Activated CD4-positive, alpha-beta memory T cell treated with anti-CD3 and anti-CD28 coated beads for 36 hours (primary cell): ENCODE measurements at regions of chr4 and their contacts with region 1.

Region 1: DNA sequence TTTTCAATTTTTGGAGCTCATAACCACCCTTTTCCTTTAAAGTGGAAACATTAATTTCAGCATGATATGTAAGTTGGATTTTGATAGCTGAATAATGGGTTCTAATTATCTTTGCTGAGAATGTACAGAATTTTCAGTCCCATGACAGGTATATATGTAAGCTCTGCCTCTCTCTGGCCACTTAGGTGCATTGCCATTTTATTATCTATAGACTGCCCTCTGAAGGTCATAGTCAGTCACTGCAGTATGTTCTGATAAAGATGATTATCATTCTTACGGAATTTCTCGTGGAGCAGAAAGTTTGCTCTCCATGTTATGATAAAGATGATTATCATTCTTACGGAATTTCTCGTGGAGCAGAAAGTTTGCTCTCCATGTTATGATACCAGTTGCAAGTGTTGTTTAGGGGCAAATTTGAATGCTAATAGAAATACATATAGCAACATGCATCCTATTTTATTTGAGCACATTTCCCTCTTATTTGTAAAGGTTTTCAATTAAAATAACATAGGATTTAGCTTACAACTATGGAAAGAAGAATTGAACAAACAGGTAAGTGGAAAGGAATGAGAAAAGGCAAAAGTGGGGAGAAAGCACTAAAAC is 10.4 kb downstream of the AFP start:
- DNase-seq: no peak
- H3K4me3 Mint-ChIP-seq: no peak overlapping the region
- H3K27ac Mint-ChIP-seq: no peak overlapping the region
- H3K4me1 Mint-ChIP-seq: no peaks in the 10 kb centered on the region
- H3K27me3 Mint-ChIP-seq: peaks cover 15% of the 10 kb centered on the region

Region 2: DNA sequence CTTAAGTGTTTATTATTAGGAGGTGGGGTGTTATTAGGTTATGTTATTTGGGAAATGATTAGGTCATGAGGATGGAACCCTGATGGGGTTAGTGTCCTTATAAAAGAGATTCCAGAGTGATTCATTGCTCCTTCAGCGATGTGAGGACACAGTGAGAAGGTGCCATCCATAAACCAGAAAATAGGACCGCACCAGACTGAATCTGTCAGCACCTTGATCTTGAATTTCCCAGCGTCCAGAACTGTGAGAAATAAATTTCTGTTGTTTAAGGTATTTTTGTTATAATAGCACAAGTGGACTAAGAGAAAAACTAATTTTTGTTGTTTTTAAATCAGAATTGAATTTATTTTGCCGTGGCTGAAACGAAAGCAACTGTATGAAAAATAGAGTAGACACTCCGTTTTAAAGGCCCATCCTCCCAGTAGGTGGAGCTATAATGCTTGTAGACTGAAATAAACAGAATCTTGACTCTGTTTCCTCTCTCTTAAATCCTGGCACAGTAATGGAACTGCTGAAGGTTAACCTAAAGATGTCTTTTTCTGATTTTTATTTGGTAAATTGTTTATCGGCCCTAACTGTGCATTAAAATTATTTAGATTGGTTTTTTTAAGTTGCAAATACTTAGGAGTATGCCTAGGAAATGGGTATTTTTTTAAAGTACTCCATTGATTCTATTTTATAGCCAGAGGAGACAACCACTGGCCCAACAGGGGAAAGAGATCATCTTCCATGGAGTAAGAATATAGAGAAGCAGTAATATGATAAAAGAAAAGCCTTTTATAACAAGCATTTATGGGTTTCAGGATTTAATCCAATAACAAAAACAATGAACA is 744.2 kb before region 1 on chr4:
- CTCF ChIA-PET with region 1: interaction called, 3 read pairs
- POLR2A ChIA-PET with region 1: no interaction called
- intact Hi-C with region 1: loop called (anchors 10 kb)
- DNase-seq: no peak
- H3K4me3 Mint-ChIP-seq: peak overlapping the region; percentile 69
- H3K27ac Mint-ChIP-seq: no peak overlapping the region
- H3K4me1 Mint-ChIP-seq: no peaks in the 10 kb centered on the region
- H3K27me3 Mint-ChIP-seq: no peaks in the 10 kb centered on the region

Region 3: DNA sequence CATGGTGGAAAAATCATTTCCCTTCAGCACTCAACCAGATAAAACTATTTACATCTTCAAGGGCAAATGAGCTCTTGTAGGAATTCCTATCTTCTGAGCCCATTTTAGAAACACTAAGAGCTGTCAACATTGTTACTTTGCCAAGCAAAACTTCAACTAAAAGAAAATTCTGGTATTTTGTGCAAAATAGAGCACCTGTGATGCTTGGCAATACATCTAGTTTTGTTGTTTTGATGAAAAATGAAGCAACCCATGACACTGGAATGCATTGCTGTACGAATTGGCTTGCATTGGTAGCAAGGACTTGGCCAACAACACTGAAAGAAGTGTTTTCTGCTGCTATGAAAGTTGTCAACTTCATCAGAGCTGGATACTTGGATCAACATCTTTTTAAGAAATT is 571.3 kb before region 1 on chr4:
- CTCF ChIA-PET with region 1: no interaction called
- POLR2A ChIA-PET with region 1: no interaction called
- intact Hi-C with region 1: no loop called
- DNase-seq: no peak
- H3K4me3 Mint-ChIP-seq: no peak overlapping the region
- H3K27ac Mint-ChIP-seq: no peak overlapping the region
- H3K4me1 Mint-ChIP-seq: no peaks in the 10 kb centered on the region
- H3K27me3 Mint-ChIP-seq: no peaks in the 10 kb centered on the region

Region 4: DNA sequence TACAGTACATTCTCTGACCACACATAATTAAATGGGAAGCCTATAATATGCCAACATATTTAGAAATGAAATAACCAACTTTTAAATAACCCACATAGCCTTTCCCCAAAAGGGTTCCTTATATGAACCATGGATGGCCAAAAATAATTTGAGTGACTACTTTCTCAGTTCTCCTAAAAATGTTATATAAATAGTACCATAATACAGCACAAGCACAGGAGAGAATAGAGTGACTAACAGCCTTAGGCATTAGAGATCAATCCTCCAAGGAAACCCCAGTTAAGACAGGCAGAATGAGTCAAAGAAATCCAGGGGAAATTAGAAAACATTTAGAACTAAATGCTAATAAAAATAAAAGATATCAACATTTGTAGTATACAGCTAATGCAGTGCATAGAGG is 238.1 kb before region 1 on chr4:
- CTCF ChIA-PET with region 1: no interaction called
- POLR2A ChIA-PET with region 1: no interaction called
- intact Hi-C with region 1: no loop called
- DNase-seq: no peak
- H3K4me3 Mint-ChIP-seq: no peak overlapping the region
- H3K27ac Mint-ChIP-seq: no peak overlapping the region
- H3K4me1 Mint-ChIP-seq: peaks cover 44% of the 10 kb centered on the region
- H3K27me3 Mint-ChIP-seq: no peaks in the 10 kb centered on the region

Region 5: GRCh38 chr4:73311428-73311827 is 135.0 kb before region 1 on chr4:
- CTCF ChIA-PET with region 1: interaction called, 19 read pairs
- POLR2A ChIA-PET with region 1: no interaction called
- intact Hi-C with region 1: loop called (anchors 1 kb)
- DNase-seq: no peak
- H3K4me3 Mint-ChIP-seq: no peak overlapping the region
- H3K27ac Mint-ChIP-seq: no peak overlapping the region
- H3K4me1 Mint-ChIP-seq: no peaks in the 10 kb centered on the region
- H3K27me3 Mint-ChIP-seq: peaks cover 2% of the 10 kb centered on the region

Region 6: GRCh38 chr4:73341454-73341853 is 105.0 kb before region 1 on chr4:
- CTCF ChIA-PET with region 1: interaction called, 18 read pairs
- POLR2A ChIA-PET with region 1: no interaction called
- intact Hi-C with region 1: loop called (anchors 10 kb)
- DNase-seq: peak; percentile 13
- H3K4me3 Mint-ChIP-seq: no peak overlapping the region
- H3K27ac Mint-ChIP-seq: no peak overlapping the region
- H3K4me1 Mint-ChIP-seq: no peaks in the 10 kb centered on the region
- H3K27me3 Mint-ChIP-seq: peaks cover 3% of the 10 kb centered on the region

Region 7: DNA sequence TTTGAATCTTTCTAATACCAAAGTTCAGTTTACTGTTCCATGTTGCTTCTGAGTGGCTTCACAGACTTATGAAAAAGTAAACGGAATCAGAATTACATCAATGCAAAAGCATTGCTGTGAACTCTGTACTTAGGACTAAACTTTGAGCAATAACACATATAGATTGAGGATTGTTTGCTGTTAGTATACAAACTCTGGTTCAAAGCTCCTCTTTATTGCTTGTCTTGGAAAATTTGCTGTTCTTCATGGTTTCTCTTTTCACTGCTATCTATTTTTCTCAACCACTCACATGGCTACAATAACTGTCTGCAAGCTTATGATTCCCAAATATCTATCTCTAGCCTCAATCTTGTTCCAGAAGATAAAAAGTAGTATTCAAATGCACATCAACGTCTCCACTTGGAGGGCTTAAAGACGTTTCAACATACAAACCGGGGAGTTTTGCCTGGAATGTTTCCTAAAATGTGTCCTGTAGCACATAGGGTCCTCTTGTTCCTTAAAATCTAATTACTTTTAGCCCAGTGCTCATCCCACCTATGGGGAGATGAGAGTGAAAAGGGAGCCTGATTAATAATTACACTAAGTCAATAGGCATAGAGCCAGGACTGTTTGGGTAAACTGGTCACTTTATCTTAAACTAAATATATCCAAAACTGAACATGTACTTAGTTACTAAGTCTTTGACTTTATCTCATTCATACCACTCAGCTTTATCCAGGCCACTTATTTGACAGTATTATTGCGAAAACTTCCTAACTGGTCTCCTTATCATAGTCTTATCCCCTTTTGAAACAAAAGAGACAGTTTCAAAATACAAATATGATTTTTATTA is 14.1 kb before region 1 on chr4:
- CTCF ChIA-PET with region 1: interaction called, 13 read pairs
- POLR2A ChIA-PET with region 1: no interaction called
- intact Hi-C with region 1: no loop called
- DNase-seq: no peak
- H3K4me3 Mint-ChIP-seq: no peak overlapping the region
- H3K27ac Mint-ChIP-seq: no peak overlapping the region
- H3K4me1 Mint-ChIP-seq: no peaks in the 10 kb centered on the region
- H3K27me3 Mint-ChIP-seq: peaks cover 6% of the 10 kb centered on the region

Region 8: GRCh38 chr4:73468170-73468569 is 21.7 kb after region 1 on chr4:
- CTCF ChIA-PET with region 1: interaction called, 10 read pairs
- POLR2A ChIA-PET with region 1: no interaction called
- intact Hi-C with region 1: no loop called
- DNase-seq: no peak
- H3K4me3 Mint-ChIP-seq: no peak overlapping the region
- H3K27ac Mint-ChIP-seq: no peak overlapping the region
- H3K4me1 Mint-ChIP-seq: no peaks in the 10 kb centered on the region
- H3K27me3 Mint-ChIP-seq: peaks cover 3% of the 10 kb centered on the region

Region 9: GRCh38 chr4:73589261-73589847 is 142.9 kb after region 1 on chr4:
- CTCF ChIA-PET with region 1: no interaction called
- POLR2A ChIA-PET with region 1: no interaction called
- intact Hi-C with region 1: no loop called
- DNase-seq: no peak
- H3K4me3 Mint-ChIP-seq: no peak overlapping the region
- H3K27ac Mint-ChIP-seq: no peak overlapping the region
- H3K4me1 Mint-ChIP-seq: no peaks in the 10 kb centered on the region
- H3K27me3 Mint-ChIP-seq: no peaks in the 10 kb centered on the region

Region 10: DNA sequence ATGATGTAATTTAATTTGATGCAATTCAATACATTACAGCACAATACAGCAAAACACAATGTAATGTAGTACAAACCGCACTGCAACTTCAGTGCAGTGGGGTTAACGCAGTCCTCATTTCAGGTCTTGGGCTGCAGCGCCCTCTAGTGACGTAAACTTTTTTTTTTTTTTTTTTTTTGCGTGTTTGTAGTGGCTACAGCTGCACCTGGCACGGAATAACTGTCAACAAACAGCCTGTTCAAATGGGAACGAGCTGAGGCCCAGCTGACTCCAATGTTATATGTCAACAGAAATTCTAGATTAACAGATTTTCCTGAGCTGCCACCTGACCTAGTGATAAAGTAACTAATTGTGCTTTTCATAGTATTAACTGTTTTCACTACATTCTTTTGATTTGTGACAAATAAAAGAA is 207.3 kb after region 1 on chr4:
- CTCF ChIA-PET with region 1: no interaction called
- POLR2A ChIA-PET with region 1: no interaction called
- intact Hi-C with region 1: loop called (anchors 10 kb)
- DNase-seq: no peak
- H3K4me3 Mint-ChIP-seq: no peak overlapping the region
- H3K27ac Mint-ChIP-seq: no peak overlapping the region
- H3K4me1 Mint-ChIP-seq: no peaks in the 10 kb centered on the region
- H3K27me3 Mint-ChIP-seq: peaks cover 2% of the 10 kb centered on the region